ENCODE measurements at regions of chr15 and their contacts with region 1.

Region 1: GRCh38 chr15:58770857-58771620 is at the start of gene MINDY2:
- DNase-seq: peak; percentile 94 to 98
- H3K4me3 ChIP-seq: peak within 1 kb of the TSS; percentile 99
- H3K4me1 ChIP-seq: peaks cover 18% of the 10 kb centered on the region
- H3K27me3 ChIP-seq: no peaks in the 10 kb centered on the region

Region 2: GRCh38 chr15:58269455-58270414 is 501.3 kb before region 1 on chr15:
- in situ Hi-C with region 1: loop called (anchors 25 kb)
- DNase-seq: peak; percentile 40 to 55
- H3K4me3 ChIP-seq: no peak overlapping the region
- H3K4me1 ChIP-seq: no peaks in the 10 kb centered on the region
- H3K27me3 ChIP-seq: no peaks in the 10 kb centered on the region

Measured in HAP-1 (cell line).